ENCODE measurements at regions of chr3 and their contacts with region 1.

Region 1: GRCh38 chr3:127544192-127544802 is 46.2 kb downstream of the TPRA1 start:
- DNase-seq: peak; percentile 74
- ATAC-seq: peak; percentile 39
- H3K4me3 ChIP-seq: no peak overlapping the region
- H3K4me3 Mint-ChIP-seq: no peak overlapping the region
- H3K27ac ChIP-seq: no peak overlapping the region
- H3K27ac Mint-ChIP-seq: no peak overlapping the region
- H3K4me1 ChIP-seq: peaks cover 3 to 15% of the 10 kb centered on the region in 2 donors
- H3K4me1 Mint-ChIP-seq: peaks cover 9% of the 10 kb centered on the region
- H3K27me3 ChIP-seq: peaks cover 0 to 3% (median 0%) of the 10 kb centered on the region in 4 experiments
- H3K27me3 Mint-ChIP-seq: peaks cover 12% of the 10 kb centered on the region
- CTCF ChIP-seq: peak; percentile 85

Region 2: DNA sequence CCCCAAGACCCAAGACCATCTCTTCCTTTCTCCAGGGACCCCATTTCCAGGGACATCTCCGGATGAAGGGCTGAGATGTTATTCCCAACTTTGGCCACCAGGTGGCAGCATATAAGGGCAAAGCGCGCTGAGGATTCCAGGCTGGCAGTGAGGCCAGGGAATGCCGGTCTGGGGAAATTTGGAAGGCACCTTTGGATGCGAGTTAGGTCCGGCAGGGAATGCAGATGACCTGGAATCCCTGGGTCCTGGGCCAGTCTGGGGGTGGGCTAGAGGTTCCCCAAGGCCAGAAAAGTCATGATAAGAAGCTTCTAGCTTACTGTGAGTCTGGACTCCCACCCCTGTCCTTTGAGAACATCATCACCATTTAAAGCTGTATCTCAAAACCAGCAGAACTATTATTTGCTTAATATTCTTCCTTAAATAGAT is 1021.9 kb before region 1 on chr3:
- CTCF ChIA-PET with region 1: interaction called, 92 read pairs
- POLR2A ChIA-PET with region 1: no interaction called
- intact Hi-C with region 1: no loop called
- DNase-seq: peak; percentile 66
- ATAC-seq: peak; percentile 24
- H3K4me3 ChIP-seq: no peak overlapping the region
- H3K4me3 Mint-ChIP-seq: no peak overlapping the region
- H3K27ac ChIP-seq: no peak overlapping the region
- H3K27ac Mint-ChIP-seq: no peak overlapping the region
- H3K4me1 ChIP-seq: peaks cover 0 to 7% of the 10 kb centered on the region in 2 donors
- H3K4me1 Mint-ChIP-seq: no peaks in the 10 kb centered on the region
- H3K27me3 ChIP-seq: peaks cover 0 to 35% (median 8%) of the 10 kb centered on the region in 4 experiments
- H3K27me3 Mint-ChIP-seq: peaks cover 31% of the 10 kb centered on the region
- CTCF ChIP-seq: peak; percentile 87

Region 3: DNA sequence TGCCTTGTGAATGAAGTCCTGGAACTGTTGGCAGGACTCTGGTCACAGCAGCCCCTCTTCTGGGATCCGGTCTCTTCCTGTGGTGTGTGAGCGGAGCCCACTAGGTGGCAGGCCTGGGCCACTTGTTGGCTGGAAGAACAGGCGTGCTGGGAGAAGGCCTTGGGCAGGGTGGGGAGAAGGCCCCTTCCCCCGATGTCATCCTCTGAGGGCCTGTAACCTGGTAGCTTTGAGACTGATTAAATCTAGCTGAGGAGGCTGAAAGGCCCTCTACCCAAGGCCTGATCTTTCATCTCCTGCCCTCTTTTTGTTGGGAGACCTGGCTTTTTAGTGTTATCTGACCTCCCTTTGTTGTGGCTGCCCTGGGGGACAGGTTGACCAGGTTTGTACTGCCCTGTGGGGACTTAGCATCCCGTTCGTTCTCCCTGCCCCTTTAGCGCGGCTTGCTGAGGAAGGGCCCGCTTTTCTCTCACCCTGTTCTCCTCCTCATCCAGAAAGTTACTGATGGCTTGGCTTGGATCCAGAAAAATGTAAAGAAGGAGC is 791.9 kb before region 1 on chr3:
- CTCF ChIA-PET with region 1: interaction called, 89 read pairs
- POLR2A ChIA-PET with region 1: no interaction called
- intact Hi-C with region 1: no loop called
- DNase-seq: peak; percentile 63
- ATAC-seq: peak; percentile 82
- H3K4me3 ChIP-seq: no peak overlapping the region
- H3K4me3 Mint-ChIP-seq: no peak overlapping the region
- H3K27ac ChIP-seq: no peak overlapping the region
- H3K27ac Mint-ChIP-seq: no peak overlapping the region
- H3K4me1 ChIP-seq: no peaks in the 10 kb centered on the region
- H3K4me1 Mint-ChIP-seq: no peaks in the 10 kb centered on the region
- H3K27me3 ChIP-seq: no peaks in the 10 kb centered on the region
- H3K27me3 Mint-ChIP-seq: no peaks in the 10 kb centered on the region
- CTCF ChIP-seq: peak; percentile 76